RWPE1 (cell line): ENCODE measurements at regions of chr15 and their contacts with region 1.

Region 1: DNA sequence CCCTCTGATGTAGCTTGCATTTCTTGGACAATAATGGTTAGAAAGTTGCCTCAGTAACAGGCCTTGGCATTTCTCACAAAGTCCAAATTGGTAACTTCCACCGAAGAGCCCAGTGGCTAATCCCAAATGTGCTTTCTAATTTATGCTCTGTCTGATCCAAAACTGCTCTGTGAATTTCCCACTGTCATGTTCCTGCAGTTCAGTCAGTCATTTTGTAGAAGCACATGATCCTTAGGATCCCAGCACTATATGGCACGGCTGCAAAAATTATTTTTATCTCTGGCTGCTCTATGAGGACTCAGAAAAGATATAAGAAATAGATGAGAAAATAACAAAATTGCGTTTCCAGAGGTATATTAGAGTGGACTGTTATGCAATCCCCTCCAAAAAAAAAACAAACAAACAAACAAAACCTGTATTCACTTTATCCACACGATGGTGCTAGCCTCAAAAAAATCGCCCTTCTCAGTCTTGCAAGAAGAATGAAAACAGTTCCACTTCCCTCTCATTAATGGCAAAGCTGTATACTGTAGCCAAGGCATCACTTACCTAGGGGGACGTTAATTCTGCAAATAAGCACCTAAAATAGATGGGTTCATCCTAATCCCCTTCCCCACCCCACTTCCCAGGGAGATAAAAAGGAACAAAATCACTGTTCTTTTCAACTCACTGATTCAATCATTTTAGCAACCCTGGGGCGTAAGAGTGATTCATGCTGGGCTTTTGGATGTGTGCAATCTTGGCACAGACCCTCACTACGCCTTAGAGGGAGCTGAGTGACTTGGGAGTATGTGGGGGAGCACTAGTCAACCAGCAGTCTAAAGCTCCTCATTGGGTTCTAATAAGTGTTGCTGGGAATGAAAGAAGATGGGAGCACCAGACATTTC is 61.3 kb downstream of the TMCO5A start:
- DNase-seq: peak; percentile 42
- H3K27ac ChIP-seq: no peak overlapping the region
- CTCF ChIP-seq: peak; percentile 83

Region 2: DNA sequence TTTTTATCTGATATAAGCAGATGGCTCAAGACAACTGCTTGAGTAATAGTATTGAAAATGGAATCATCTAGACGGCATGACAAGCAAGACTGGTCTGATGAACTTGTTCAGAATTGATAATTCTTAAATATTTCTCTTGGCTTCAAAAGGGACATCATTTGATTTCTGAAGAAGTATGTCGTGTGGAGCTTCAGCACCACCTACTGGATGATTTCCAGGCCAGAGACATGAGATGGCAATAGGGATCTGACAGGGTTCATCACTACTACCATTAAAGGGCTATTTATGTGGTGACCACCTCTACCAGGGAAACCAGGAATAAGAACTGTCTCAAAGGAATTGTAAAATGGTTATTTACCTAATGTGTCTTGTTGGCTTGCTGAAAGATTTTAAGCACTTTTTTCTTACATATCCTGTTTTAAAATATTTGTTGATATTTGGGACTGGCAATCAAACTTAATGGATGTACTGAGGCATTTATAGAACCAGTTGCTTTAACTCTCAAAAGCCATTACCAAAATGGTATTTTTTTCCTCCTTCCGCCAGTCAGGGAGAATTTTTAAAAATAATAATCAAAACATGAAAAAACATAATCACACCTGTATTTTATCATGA is 358.7 kb after region 1 on chr15:
- CTCF ChIA-PET with region 1: interaction called, 12 read pairs
- POLR2A ChIA-PET with region 1: no interaction called
- DNase-seq: peak; percentile 45
- H3K27ac ChIP-seq: no peak overlapping the region
- CTCF ChIP-seq: peak; percentile 92

Region 3: GRCh38 chr15:38401106-38401505 is 405.4 kb after region 1 on chr15:
- CTCF ChIA-PET with region 1: interaction called, 11 read pairs
- POLR2A ChIA-PET with region 1: no interaction called
- DNase-seq: no peak
- H3K27ac ChIP-seq: no peak overlapping the region
- CTCF ChIP-seq: no peak